SK-N-SH (cell line): ENCODE measurements at regions of chr10 and their contacts with region 1.

Region 1: DNA sequence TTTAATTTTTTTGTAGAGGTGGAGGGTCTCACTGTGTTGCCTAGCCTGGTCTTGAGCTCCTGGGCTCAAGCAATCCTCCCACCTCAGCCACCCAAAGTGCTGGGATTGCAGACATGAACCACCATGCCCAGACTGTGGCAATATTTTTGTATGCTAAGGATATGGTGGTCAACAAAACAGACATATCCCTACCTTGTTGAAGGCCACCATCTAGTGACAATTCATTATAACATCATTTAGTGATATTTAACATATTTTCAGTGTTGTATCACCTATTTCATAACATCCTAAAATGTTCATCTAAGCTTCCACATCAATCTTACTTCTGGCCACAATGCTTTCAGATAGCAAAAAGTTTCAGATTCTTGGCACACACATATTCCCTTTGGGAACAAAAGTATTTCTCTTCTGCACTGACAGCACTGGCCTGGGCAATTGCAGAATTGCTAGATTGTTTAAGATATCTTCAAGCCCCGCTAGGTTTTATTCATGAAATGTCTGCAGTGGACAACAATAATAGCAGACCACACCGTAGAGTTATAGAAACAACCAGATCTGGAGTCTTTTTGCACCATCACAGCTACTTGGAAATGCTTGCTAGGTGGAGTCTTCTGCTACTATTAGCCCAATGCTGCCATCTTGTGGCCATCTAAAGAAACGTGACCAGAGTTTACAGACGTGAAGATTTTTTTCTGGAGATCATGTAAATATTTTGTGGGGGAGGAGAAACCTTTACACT is 58.4 kb downstream of the DNAJC12 start:
- DNase-seq: peak; percentile 61
- H3K4me3 ChIP-seq: no peak overlapping the region; a peak in 1 of 4 replicates
- H3K27ac ChIP-seq: no peak overlapping the region
- H3K4me1 ChIP-seq: no peaks in the 10 kb centered on the region
- H3K27me3 ChIP-seq: peaks cover 5% of the 10 kb centered on the region
- CTCF ChIP-seq: peak; percentile 81
- EP300 ChIP-seq: no peak
- RAD21 ChIP-seq: peak; percentile 93

Region 2: DNA sequence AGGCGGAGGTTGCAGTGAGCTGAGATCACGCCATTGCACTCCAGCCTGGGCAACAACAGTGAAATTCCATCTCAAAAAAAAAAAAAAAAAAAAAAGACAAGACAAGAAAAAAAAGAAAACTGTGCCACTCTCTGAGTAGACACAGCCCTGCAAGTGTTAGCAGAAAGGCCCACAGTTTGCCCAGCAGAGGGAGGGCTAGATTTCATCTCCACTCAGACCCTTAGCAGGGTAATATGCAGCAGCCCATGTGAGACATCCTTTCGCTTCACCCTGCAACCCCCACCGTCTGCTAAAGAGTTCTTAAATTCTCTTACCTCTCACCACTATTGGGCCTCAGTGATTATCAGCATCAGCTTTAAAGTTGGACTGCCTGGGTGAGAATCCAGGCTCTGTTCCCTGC is 121.9 kb before region 1 on chr10:
- CTCF ChIA-PET with region 1: interaction called, 77 read pairs
- POLR2A ChIA-PET with region 1: no interaction called
- DNase-seq: no peak
- H3K4me3 ChIP-seq: no peak overlapping the region
- H3K27ac ChIP-seq: no peak overlapping the region
- H3K4me1 ChIP-seq: no peaks in the 10 kb centered on the region
- H3K27me3 ChIP-seq: 0 out of 2 replicates have a peak, but pooled peaks cover 4% of the 10 kb centered on the region
- CTCF ChIP-seq: no peak
- EP300 ChIP-seq: no peak
- RAD21 ChIP-seq: no peak

Region 3: DNA sequence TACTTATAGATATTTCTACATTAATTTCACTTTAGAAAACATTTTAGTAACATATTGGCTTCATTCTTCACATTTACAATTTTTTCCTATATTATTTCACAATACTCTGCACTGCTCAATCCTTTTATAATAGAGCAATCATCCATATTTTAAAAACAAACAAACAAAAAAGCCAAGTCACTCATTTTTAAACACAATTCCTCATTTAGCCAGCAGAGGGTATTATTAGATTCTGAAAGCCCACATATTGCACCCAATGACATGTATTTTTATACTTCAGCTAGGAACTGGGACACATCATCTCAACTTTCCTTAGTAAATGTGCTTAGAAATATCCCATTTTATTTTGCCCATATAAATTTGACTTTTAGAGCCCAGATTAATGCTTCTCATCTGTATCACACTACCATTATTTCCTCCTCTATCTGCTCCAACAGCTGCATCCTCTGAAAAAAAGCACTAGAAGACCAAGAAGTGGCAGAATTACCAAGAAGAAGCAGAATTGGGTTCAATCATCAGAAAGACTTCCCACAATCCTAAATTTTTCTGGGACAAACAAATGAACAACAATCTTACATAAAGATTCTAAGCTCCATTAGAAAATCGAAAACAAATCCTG is 113.1 kb before region 1 on chr10:
- CTCF ChIA-PET with region 1: interaction called, 77 read pairs
- POLR2A ChIA-PET with region 1: no interaction called
- DNase-seq: peak; percentile 26
- H3K4me3 ChIP-seq: no peak overlapping the region; a peak in 1 of 4 replicates
- H3K27ac ChIP-seq: no peak overlapping the region
- H3K4me1 ChIP-seq: no peaks in the 10 kb centered on the region
- H3K27me3 ChIP-seq: no peaks in the 10 kb centered on the region
- CTCF ChIP-seq: peak; percentile 62
- EP300 ChIP-seq: no peak
- RAD21 ChIP-seq: peak; percentile 58

Region 4: GRCh38 chr10:67676203-67676825 is 103.3 kb before region 1 on chr10:
- CTCF ChIA-PET with region 1: interaction called, 12 read pairs
- POLR2A ChIA-PET with region 1: no interaction called
- DNase-seq: no peak
- H3K4me3 ChIP-seq: no peak overlapping the region
- H3K27ac ChIP-seq: no peak overlapping the region
- H3K4me1 ChIP-seq: no peaks in the 10 kb centered on the region
- H3K27me3 ChIP-seq: no peaks in the 10 kb centered on the region; the same call in 1 of the 2 replicates
- CTCF ChIP-seq: no peak
- EP300 ChIP-seq: no peak
- RAD21 ChIP-seq: no peak

Region 5: GRCh38 chr10:67705921-67706320 is 73.7 kb before region 1 on chr10:
- CTCF ChIA-PET with region 1: interaction called, 12 read pairs
- POLR2A ChIA-PET with region 1: no interaction called
- DNase-seq: no peak
- H3K4me3 ChIP-seq: no peak overlapping the region
- H3K27ac ChIP-seq: no peak overlapping the region
- H3K4me1 ChIP-seq: no peaks in the 10 kb centered on the region
- H3K27me3 ChIP-seq: no peaks in the 10 kb centered on the region
- CTCF ChIP-seq: no peak
- EP300 ChIP-seq: no peak
- RAD21 ChIP-seq: no peak

Region 6: GRCh38 chr10:67722113-67722512 is 57.5 kb before region 1 on chr10:
- CTCF ChIA-PET with region 1: interaction called, 17 read pairs
- POLR2A ChIA-PET with region 1: no interaction called
- DNase-seq: no peak
- H3K4me3 ChIP-seq: no peak overlapping the region
- H3K27ac ChIP-seq: no peak overlapping the region
- H3K4me1 ChIP-seq: no peaks in the 10 kb centered on the region
- H3K27me3 ChIP-seq: 0 out of 2 replicates have a peak, but pooled peaks cover 7% of the 10 kb centered on the region
- CTCF ChIP-seq: no peak
- EP300 ChIP-seq: no peak
- RAD21 ChIP-seq: no peak

Region 7: DNA sequence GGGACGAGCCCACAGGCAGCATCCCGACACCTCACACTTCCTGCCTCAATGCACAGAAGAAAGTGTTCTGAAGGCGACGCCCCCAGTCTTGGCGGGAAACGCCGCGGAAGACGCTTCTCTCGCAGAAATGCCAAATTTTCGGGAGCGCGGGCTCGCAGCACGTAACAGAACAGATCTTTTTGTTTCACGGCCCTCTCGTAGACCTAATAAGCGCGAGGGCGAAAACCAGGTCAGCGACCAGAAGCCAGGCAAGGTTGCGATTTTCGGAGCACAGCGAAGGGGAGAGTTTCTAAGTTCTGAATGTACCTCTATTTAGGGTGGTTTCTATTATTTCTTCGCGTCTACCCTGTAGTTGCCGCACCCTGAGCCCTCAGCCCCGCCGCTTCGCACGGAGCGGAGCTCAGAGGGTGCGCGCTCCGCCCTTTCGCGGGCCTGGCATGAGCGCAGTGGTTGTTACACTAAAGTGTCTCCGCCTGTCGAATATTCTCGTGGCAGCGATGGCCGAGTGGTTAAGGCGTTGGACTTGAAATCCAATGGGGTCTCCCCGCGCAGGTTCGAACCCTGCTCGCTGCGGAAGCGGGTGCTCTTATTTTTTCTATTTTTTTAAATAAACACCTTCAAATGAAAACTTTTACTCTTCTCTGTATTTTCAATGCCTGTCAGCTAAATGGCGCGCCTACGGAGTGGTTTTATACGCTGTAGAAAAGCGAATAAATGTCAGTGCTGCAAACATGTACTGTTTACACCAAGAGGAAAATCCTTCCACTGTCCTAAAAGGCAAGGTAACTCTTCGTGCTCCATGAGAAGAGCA is 15.4 kb before region 1 on chr10:
- CTCF ChIA-PET with region 1: interaction called, 70 read pairs
- POLR2A ChIA-PET with region 1: no interaction called
- DNase-seq: peak; percentile 80
- H3K4me3 ChIP-seq: peak overlapping the region; percentile 83 to 93
- H3K27ac ChIP-seq: peak overlapping the region; percentile 58 to 92
- H3K4me1 ChIP-seq: peaks cover 0 to 6% of the 10 kb centered on the region in 2 experiments; a peak in 2 of 4 replicates
- H3K27me3 ChIP-seq: no peaks in the 10 kb centered on the region
- CTCF ChIP-seq: no peak
- EP300 ChIP-seq: peak in 1 of 2 experiments; percentile 13; a peak in 1 of 4 replicates
- RAD21 ChIP-seq: no peak